ENCODE measurements at regions of chr5 and their contacts with region 1.

Region 1: DNA sequence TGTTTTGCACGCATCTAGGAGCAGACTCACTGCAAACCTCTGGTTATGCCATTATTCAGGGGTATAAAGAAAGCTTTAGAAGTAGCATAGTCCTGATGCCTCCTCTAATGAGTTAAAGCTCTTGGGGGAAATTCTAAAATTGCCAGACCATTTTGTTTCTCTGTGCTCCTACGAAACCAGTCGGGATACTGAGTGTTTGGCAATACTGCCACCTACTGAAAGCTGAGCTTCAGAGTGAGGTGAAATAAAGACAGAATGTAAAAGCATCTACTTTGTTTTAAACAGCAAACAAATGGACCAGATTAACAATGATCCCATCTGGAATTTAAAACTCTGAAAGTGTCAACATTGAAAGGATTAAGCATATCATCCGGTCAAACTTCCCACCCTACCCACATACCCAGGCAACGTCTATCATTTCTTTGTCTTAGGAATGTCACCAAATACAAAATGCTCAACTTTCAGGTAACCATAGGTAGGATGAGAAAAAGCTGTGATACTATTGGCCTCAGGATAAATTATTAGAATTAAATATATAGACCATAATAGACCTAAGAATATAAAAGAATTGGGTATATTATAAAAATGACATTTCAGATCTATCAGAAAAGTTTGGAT is 77.8 kb upstream of the SHISAL2B start:
- DNase-seq: peak; percentile 33
- ATAC-seq: no peak
- H3K4me3 Mint-ChIP-seq: no peak overlapping the region
- H3K27ac Mint-ChIP-seq: no peak overlapping the region
- H3K4me1 Mint-ChIP-seq: no peaks in the 10 kb centered on the region
- H3K27me3 Mint-ChIP-seq: peaks cover 20% of the 10 kb centered on the region
- CTCF ChIP-seq: peak; percentile 52

Region 2: DNA sequence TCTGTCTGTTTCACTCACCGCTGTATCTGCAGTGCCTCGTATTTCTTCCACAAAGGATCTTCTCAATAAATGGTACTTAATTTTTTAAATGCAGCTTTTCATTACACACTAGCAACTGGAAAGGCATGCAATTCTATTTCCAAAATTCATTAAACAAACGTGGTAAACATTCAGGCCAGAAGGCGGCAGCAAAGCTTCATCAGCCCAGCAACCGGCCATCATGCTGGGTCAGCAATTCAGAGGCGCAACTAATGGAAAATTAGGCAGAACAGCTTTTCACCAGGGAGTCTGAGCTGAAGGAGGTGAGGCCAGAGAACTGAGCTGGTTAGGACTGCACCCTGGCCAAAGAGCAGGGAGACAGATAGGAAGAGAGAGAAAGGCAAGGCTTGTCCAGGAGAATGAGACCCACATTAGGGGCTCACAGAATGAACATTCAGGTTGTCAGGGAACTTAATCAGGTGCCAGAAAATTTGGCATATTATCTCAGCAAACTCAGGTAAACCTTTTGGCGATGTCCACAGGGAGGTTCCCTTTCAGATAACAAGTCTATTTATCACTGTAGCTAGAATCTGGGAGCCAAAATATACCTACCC is 464.5 kb before region 1 on chr5:
- CTCF ChIA-PET with region 1: no interaction called
- POLR2A ChIA-PET with region 1: no interaction called
- intact Hi-C with region 1: loop called (anchors 5 kb)
- DNase-seq: peak; percentile 30
- ATAC-seq: no peak
- H3K4me3 Mint-ChIP-seq: no peak overlapping the region
- H3K27ac Mint-ChIP-seq: no peak overlapping the region
- H3K4me1 Mint-ChIP-seq: no peaks in the 10 kb centered on the region
- H3K27me3 Mint-ChIP-seq: no peaks in the 10 kb centered on the region
- CTCF ChIP-seq: peak; percentile 12

Region 3: DNA sequence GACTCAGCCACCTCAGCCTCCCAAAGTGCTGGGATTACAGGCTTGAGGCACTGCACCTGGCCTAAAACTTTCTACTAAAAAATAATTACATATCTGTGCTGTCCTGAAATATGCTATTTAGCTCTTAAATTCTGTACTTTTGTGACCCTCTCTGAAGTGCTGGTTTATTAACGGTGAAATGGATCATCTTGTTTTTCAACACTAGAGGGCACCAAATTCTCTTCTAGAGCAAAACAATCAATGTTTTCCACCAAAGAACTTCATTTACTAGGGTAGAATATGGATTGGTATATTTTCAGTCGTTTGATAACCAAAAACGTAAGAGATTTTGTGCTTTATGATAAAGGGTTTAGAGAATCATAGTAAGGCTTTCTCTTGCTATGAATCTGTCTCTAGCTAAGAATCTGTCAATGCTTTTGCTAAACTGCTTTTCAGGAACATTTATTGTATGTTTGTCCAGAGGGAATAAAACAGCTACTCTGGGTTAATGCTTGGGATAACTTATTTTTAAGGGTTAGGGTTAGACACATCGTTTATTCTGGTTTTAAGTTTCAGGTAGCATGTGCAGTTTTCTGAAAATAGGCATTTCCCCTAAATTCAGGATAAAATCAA is 383.2 kb before region 1 on chr5:
- CTCF ChIA-PET with region 1: interaction called, 40 read pairs
- POLR2A ChIA-PET with region 1: no interaction called
- intact Hi-C with region 1: loop called (anchors 5 kb)
- DNase-seq: no peak
- ATAC-seq: no peak
- H3K4me3 Mint-ChIP-seq: no peak overlapping the region
- H3K27ac Mint-ChIP-seq: no peak overlapping the region
- H3K4me1 Mint-ChIP-seq: no peaks in the 10 kb centered on the region
- H3K27me3 Mint-ChIP-seq: no peaks in the 10 kb centered on the region
- CTCF ChIP-seq: peak; percentile 77

Measured in activated CD8-positive, alpha-beta T cell treated with anti-CD3 and anti-CD28 coated beads for 36 hours (primary cell).